ENCODE measurements at regions of chr1 and their contacts with region 1.

Region 1: GRCh38 chr1:168603501-168604110 is 27.2 kb downstream of the XCL1 start:
- DNase-seq: peak; percentile 56
- ATAC-seq: peak; percentile 98
- H3K4me3 ChIP-seq: no peak overlapping the region
- H3K27ac ChIP-seq: no peak overlapping the region
- H3K4me1 ChIP-seq: no peaks in the 10 kb centered on the region
- H3K27me3 ChIP-seq: no peaks in the 10 kb centered on the region
- CTCF ChIP-seq: peak; percentile 82 to 93 (median 87)
- POLR2A ChIP-seq: no peak
- RAD21 ChIP-seq: peak; percentile 95

Region 2: GRCh38 chr1:168439456-168440375 is 163.9 kb before region 1 on chr1:
- CTCF ChIA-PET with region 1: interaction called, 27 read pairs
- POLR2A ChIA-PET with region 1: no interaction called
- RAD21 ChIA-PET with region 1: interaction called, 4 to 11 read pairs
- intact Hi-C with region 1: loop called (anchors 1 kb)
- DNase-seq: peak; percentile 80
- ATAC-seq: peak; percentile 96
- H3K4me3 ChIP-seq: peak overlapping the region; percentile 13 to 50; a peak in 3 of 4 replicates
- H3K27ac ChIP-seq: no peak overlapping the region; the same call in 1 of the 2 replicates
- H3K4me1 ChIP-seq: peaks cover 17 to 22% of the 10 kb centered on the region in 2 experiments; a peak in 3 of 4 replicates
- H3K27me3 ChIP-seq: no peaks in the 10 kb centered on the region
- CTCF ChIP-seq: peak; percentile 82 to 86 (median 86)
- POLR2A ChIP-seq: no peak
- RAD21 ChIP-seq: peak; percentile 96

Region 3: GRCh38 chr1:168803806-168804510 is 200.4 kb after region 1 on chr1:
- CTCF ChIA-PET with region 1: no interaction called
- POLR2A ChIA-PET with region 1: no interaction called
- RAD21 ChIA-PET with region 1: no interaction called
- intact Hi-C with region 1: no loop called
- DNase-seq: no peak
- ATAC-seq: no peak
- H3K4me3 ChIP-seq: no peak overlapping the region
- H3K27ac ChIP-seq: no peak overlapping the region
- H3K4me1 ChIP-seq: no peaks in the 10 kb centered on the region
- H3K27me3 ChIP-seq: no peaks in the 10 kb centered on the region
- CTCF ChIP-seq: no peak
- POLR2A ChIP-seq: no peak
- RAD21 ChIP-seq: no peak

Region 4: GRCh38 chr1:169106095-169106920 is 502.7 kb after region 1 on chr1 and contains the start of gene ATP1B1:
- CTCF ChIA-PET with region 1: interaction called, 6 read pairs
- POLR2A ChIA-PET with region 1: no interaction called
- RAD21 ChIA-PET with region 1: no interaction called
- intact Hi-C with region 1: loop called (anchors 1 kb)
- DNase-seq: peak; percentile 64
- ATAC-seq: peak; percentile 86
- H3K4me3 ChIP-seq: peak within 1 kb of the TSS; percentile 72 to 84
- H3K27ac ChIP-seq: peak within 1 kb of the TSS; percentile 85
- H3K4me1 ChIP-seq: peaks cover 50 to 65% of the 10 kb centered on the region in 2 experiments
- H3K27me3 ChIP-seq: no peaks in the 10 kb centered on the region
- CTCF ChIP-seq: 0 out of 6 replicates have a peak, but pooled peaks of 1 of the 3 experiments have one; percentile 16
- POLR2A ChIP-seq: peak; percentile 90
- RAD21 ChIP-seq: no peak
- total RNA-seq, gene ATP1B1: 48.6 TPM

Region 5: GRCh38 chr1:169133801-169134502 is 530.3 kb after region 1 on chr1:
- CTCF ChIA-PET with region 1: interaction called, 3 read pairs
- POLR2A ChIA-PET with region 1: no interaction called
- RAD21 ChIA-PET with region 1: no interaction called
- intact Hi-C with region 1: loop called (anchors 5 kb)
- DNase-seq: no peak
- ATAC-seq: no peak; the same call in none of the 2 replicates
- H3K4me3 ChIP-seq: no peak overlapping the region
- H3K27ac ChIP-seq: no peak overlapping the region
- H3K4me1 ChIP-seq: peaks cover 0 to 22% of the 10 kb centered on the region in 2 experiments; a peak in 2 of 4 replicates
- H3K27me3 ChIP-seq: no peaks in the 10 kb centered on the region
- CTCF ChIP-seq: peak; percentile 8 to 46 (median 39); a peak in 4 of 6 replicates
- POLR2A ChIP-seq: no peak
- RAD21 ChIP-seq: peak; percentile 66

Region 6: DNA sequence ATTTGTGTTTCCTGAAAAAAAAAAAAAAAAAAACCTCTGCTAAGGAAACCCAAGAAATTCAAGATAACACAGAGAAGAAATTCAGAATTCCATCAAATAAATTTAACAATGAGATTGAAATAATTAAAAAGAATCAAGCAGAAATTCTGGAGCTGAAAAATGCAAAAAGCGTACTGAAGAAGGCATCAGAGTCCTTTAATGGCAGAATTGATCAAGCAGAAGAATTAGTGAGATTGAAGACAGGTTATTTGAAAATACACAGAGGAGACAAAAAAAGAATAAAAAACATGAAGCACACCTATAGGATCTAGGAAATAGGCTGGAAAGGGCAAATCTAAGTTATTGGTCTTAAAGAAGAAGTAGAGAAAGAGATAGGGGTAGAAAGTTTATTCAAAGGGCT is 725.8 kb after region 1 on chr1:
- CTCF ChIA-PET with region 1: no interaction called
- POLR2A ChIA-PET with region 1: no interaction called
- RAD21 ChIA-PET with region 1: no interaction called
- intact Hi-C with region 1: no loop called
- DNase-seq: no peak
- ATAC-seq: no peak
- H3K4me3 ChIP-seq: no peak overlapping the region
- H3K27ac ChIP-seq: no peak overlapping the region
- H3K4me1 ChIP-seq: peaks cover 0 to 28% of the 10 kb centered on the region in 2 experiments; a peak in 3 of 4 replicates
- H3K27me3 ChIP-seq: no peaks in the 10 kb centered on the region
- CTCF ChIP-seq: no peak
- POLR2A ChIP-seq: no peak
- RAD21 ChIP-seq: no peak

Region 7: DNA sequence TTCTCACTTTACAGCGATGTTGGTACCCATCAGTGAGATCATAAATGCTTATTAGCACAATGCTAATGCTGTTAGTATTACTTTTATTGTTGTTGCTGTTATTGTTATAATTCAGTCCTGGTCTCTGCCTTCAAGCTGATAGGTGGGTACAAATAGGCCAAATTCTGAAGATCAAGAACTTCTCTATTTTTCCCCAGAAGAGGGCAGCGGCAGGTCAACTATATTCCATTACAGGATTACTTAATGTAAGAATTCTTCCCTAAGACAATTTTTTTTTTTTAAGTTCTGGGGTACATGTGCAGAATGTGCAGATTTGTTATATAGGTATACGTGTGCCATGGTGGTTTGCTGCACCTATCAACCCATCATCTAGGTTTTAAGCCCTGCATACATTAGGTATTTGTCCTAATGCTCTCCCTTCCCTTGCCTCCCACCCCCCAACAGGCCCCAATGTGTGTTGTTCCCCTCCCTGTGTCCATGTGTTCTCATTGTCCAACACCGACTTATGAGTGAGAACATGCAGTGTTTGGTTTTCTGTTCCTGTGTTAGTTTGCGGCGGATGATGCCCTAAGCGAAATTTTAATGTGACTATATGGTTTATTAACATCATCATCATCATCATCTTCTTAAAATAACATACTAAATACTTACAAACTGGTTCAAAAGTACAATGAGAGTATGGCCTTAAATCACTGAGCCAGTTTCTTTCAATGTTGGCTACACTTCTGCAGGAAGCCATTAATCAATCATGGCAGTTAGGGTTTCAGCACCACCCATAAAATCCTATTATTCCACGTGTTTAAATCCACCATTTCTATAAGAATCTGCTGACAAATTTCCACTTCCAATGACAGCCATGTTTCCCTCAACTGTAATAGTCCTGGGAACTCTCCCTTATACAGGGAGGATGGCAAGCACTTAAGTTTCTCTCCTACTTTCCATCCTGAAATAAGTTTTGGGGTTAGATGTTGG is 862.9 kb after region 1 on chr1:
- CTCF ChIA-PET with region 1: interaction called, 10 read pairs
- POLR2A ChIA-PET with region 1: no interaction called
- RAD21 ChIA-PET with region 1: no interaction called
- intact Hi-C with region 1: loop called (anchors 10 kb)
- DNase-seq: peak; percentile 27
- ATAC-seq: peak; percentile 70
- H3K4me3 ChIP-seq: no peak overlapping the region
- H3K27ac ChIP-seq: no peak overlapping the region
- H3K4me1 ChIP-seq: no peaks in the 10 kb centered on the region
- H3K27me3 ChIP-seq: no peaks in the 10 kb centered on the region
- CTCF ChIP-seq: peak; percentile 8 to 51 (median 51); a peak in 4 of 6 replicates
- POLR2A ChIP-seq: no peak
- RAD21 ChIP-seq: peak; percentile 67

Region 8: GRCh38 chr1:169546087-169546995 is 942.7 kb after region 1 on chr1:
- CTCF ChIA-PET with region 1: interaction called, 35 read pairs
- POLR2A ChIA-PET with region 1: no interaction called
- RAD21 ChIA-PET with region 1: interaction called, 4 read pairs
- intact Hi-C with region 1: loop called (anchors 1 kb)
- DNase-seq: peak; percentile 65
- ATAC-seq: peak; percentile 89
- H3K4me3 ChIP-seq: no peak overlapping the region
- H3K27ac ChIP-seq: no peak overlapping the region
- H3K4me1 ChIP-seq: no peaks in the 10 kb centered on the region
- H3K27me3 ChIP-seq: no peaks in the 10 kb centered on the region
- CTCF ChIP-seq: peak; percentile 77 to 84 (median 82)
- POLR2A ChIP-seq: no peak
- RAD21 ChIP-seq: peak; percentile 92

Region 9: DNA sequence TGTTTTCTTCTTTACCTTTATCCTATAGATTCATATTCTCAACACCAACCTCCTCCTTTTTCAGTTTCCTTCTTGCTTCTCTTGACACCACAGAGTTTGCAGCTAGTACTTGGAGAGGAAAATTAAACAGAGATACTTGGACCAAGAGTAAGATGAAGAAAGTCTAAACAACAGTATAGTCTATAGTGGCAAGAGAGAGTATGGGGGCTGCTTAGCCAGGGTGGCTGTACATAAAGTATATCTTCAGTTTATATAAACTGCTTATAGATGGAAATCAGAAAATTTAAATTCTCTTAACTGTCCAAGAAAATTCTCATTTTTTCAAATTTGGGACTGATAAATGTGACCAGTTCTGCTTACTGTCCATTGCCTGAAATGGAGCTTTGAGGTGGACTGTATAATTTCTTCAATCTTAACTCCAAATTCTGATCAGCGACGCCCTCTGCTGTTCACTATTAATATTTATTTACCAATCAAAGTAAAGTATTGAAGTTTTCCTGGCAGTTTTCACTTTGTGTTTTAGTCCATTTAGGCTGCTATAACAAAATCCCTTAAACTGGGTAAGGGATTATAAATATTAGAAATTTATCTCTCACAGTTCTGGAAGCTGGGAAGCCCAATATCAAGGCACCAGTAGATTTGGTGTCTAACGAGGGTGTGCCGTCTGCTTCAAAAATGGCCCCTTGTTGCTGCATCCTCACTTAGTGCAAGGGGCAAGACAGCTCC is 1205.9 kb after region 1 on chr1:
- CTCF ChIA-PET with region 1: interaction called, 3 read pairs
- POLR2A ChIA-PET with region 1: no interaction called
- RAD21 ChIA-PET with region 1: no interaction called
- intact Hi-C with region 1: loop called (anchors 2 kb)
- DNase-seq: peak; percentile 21
- ATAC-seq: peak; percentile 68
- H3K4me3 ChIP-seq: no peak overlapping the region
- H3K27ac ChIP-seq: no peak overlapping the region
- H3K4me1 ChIP-seq: no peaks in the 10 kb centered on the region
- H3K27me3 ChIP-seq: no peaks in the 10 kb centered on the region
- CTCF ChIP-seq: peak in 2 of 3 experiments; percentile 60 to 62; a peak in 3 of 6 replicates
- POLR2A ChIP-seq: no peak
- RAD21 ChIP-seq: peak; percentile 77